ENCODE measurements at regions of chr11 and their contacts with region 1.

Region 1: GRCh38 chr11:16791191-16791961 is 52.9 kb downstream of the C11orf58 start:
- DNase-seq: no peak
- H3K4me3 ChIP-seq: no peak overlapping the region
- H3K27ac ChIP-seq: no peak overlapping the region
- H3K4me1 ChIP-seq: no peaks in the 10 kb centered on the region
- H3K27me3 ChIP-seq: no peaks in the 10 kb centered on the region
- CTCF ChIP-seq: no peak
- POLR2A ChIP-seq: no peak

Region 2: GRCh38 chr11:16312233-16312765 is 479.1 kb before region 1 on chr11:
- intact Hi-C with region 1: no loop called
- DNase-seq: no peak
- H3K4me3 ChIP-seq: no peak overlapping the region
- H3K27ac ChIP-seq: no peak overlapping the region
- H3K4me1 ChIP-seq: no peaks in the 10 kb centered on the region
- H3K27me3 ChIP-seq: no peaks in the 10 kb centered on the region
- CTCF ChIP-seq: no peak
- POLR2A ChIP-seq: no peak

Region 3: GRCh38 chr11:16935518-16936302 is 144.3 kb after region 1 on chr11:
- intact Hi-C with region 1: loop called (anchors 10 kb)
- DNase-seq: no peak
- H3K4me3 ChIP-seq: no peak overlapping the region
- H3K27ac ChIP-seq: no peak overlapping the region
- H3K4me1 ChIP-seq: no peaks in the 10 kb centered on the region
- H3K27me3 ChIP-seq: no peaks in the 10 kb centered on the region
- CTCF ChIP-seq: peak in 3 of 4 experiments; percentile 21 to 56 (median 52)
- POLR2A ChIP-seq: no peak

Region 4: DNA sequence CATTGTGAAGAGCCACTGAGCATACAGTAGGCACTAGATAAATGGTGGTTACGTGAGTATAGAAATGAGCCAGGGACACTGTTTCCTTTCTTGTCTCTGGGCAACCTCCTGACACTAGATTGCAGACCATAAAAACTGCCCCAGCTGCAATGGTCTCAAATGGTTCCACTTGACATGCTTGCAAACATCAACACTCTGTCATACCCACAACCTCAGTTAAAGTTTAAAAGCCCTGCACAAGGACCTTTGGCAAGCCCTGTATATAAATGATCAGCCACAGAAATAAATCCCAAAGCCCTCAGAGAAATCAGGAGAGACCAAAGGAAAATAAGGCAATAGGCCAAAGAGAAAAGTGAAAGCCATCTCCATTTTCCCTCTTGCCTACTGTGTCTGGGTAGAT is 202.1 kb after region 1 on chr11:
- intact Hi-C with region 1: no loop called
- DNase-seq: no peak
- H3K4me3 ChIP-seq: no peak overlapping the region
- H3K27ac ChIP-seq: no peak overlapping the region
- H3K4me1 ChIP-seq: no peaks in the 10 kb centered on the region
- H3K27me3 ChIP-seq: no peaks in the 10 kb centered on the region
- CTCF ChIP-seq: no peak
- POLR2A ChIP-seq: no peak